ENCODE measurements at regions of chr12 and their contacts with region 1.

Region 1: DNA sequence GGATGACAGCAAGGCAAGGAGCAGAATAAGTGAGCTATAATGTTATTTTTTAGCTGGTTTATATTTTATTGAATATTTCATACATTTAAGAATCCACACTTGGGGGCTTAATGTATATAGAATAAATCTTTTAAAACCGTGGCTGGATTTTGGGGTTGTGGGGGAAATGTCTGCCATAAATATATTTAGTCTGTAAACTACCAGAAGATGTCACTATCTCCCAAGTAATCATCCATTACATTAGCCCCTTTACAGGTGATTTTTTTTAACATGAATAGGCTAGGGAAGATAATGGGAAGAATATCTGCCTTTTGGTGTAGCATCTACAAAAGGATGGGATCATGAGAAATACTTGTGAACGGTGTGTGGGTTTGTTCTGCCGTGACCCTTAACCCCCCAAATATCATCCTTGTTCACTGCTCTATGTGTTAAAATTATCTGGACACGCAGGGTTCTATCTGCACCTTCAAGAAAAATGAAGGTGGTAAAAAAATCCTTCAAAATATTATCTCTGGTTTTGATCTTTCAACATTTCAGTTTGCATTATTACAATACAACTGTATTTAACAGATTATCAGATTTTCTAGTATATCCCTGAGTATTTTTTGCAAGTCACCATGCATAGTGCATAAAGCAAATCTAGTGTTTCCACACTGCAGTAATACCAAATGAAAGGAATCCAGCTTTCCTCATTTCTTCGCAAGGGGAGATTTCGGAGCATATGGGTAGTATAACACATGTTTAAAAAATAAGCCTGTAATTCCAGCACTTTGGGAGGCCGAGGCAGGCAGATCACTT is 8.0 kb upstream of the SLC17A8 start:
- DNase-seq: no peak
- ATAC-seq: no peak
- H3K4me3 ChIP-seq: no peak overlapping the region
- H3K4me3 Mint-ChIP-seq: no peak overlapping the region
- H3K27ac ChIP-seq: no peak overlapping the region
- H3K27ac Mint-ChIP-seq: no peak overlapping the region
- H3K4me1 ChIP-seq: no peaks in the 10 kb centered on the region
- H3K4me1 Mint-ChIP-seq: no peaks in the 10 kb centered on the region
- H3K27me3 ChIP-seq: no peaks in the 10 kb centered on the region
- H3K27me3 Mint-ChIP-seq: peaks cover 4 to 7% of the 10 kb centered on the region in 2 donors

Region 2: DNA sequence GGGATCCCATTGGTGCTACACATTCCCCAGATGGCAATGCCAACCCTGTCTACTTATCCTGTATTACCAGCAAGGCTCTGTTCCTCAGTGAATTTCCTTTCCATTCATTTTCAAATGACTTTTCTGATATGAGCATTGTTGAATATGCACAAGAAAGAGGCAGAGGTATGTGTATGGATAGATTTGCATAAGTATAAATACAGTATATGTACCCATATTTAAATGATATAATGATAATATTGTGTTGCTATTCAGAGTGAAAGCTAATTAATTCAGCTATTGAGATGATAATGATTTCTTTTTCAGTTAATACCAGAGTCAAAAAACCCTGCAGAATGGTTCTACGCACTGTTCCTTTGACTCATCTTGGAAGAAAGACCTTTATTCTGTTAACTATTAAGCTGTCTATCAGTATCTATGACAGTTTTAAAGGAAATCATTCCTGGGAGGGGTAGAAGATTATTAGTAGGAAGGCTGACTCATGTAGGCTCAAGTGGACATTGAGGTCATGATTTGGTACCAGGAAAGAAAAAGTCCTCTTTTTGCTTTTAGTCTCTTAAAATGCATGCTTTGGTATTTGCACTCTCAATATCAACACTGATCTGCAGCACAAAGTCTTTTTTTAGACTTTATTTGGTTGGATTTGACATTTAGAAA is 179.7 kb after region 1 on chr12:
- CTCF ChIA-PET with region 1: interaction called in 1 of 2 experiments, 20 read pairs
- POLR2A ChIA-PET with region 1: no interaction called
- DNase-seq: no peak
- ATAC-seq: no peak
- H3K4me3 ChIP-seq: no peak overlapping the region
- H3K4me3 Mint-ChIP-seq: no peak overlapping the region
- H3K27ac ChIP-seq: no peak overlapping the region
- H3K27ac Mint-ChIP-seq: no peak overlapping the region
- H3K4me1 ChIP-seq: no peaks in the 10 kb centered on the region
- H3K4me1 Mint-ChIP-seq: no peaks in the 10 kb centered on the region
- H3K27me3 ChIP-seq: peaks cover 0 to 2% of the 10 kb centered on the region in 2 experiments
- H3K27me3 Mint-ChIP-seq: peaks cover 16 to 22% of the 10 kb centered on the region in 2 donors